ENCODE measurements at regions of chr12 and their contacts with region 1.

Region 1: GRCh38 chr12:103626498-103626897 is 39.4 kb downstream of the STAB2 start:
- DNase-seq: peak in 4 of 5 donors; percentile 63 to 77 (median 68)
- ATAC-seq: peak; percentile 79 to 91 (median 83)
- H3K4me3 ChIP-seq: no peak overlapping the region
- H3K27ac ChIP-seq: peak overlapping the region in 11 of 12 donors; percentile 37 to 82 (median 68)
- H3K4me1 ChIP-seq: peaks cover 0 to 19% (median 7%) of the 10 kb centered on the region in 12 donors
- H3K27me3 ChIP-seq: no peaks in the 10 kb centered on the region
- CTCF ChIP-seq: peak in 7 of 12 donors; percentile 25 to 70 (median 38)
- POLR2A ChIP-seq: no peak

Region 2: DNA sequence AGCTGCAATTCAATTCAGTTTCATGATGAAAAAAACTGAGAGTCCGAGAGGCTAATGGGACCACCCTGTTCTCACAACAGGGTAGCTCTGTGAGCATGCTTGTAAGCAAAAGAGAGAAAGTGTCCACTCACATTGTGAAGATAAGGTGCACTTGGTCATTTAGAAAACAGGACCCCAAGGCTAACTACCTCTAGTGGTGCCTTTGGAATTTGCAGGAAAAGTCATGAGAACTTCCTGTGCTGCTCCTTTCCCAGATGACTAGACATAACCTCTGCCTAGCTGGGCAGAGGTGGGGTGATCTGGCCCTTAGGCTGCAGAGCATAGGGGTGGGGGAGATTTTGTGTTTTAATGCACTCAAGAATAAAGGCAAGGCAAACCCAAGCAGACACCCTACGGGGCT is 79.4 kb after region 1 on chr12:
- intact Hi-C with region 1: no loop called
- DNase-seq: no peak
- ATAC-seq: no peak
- H3K4me3 ChIP-seq: no peak overlapping the region
- H3K27ac ChIP-seq: no peak overlapping the region
- H3K4me1 ChIP-seq: no peaks in the 10 kb centered on the region
- H3K27me3 ChIP-seq: no peaks in the 10 kb centered on the region
- CTCF ChIP-seq: no peak
- POLR2A ChIP-seq: no peak

Region 3: GRCh38 chr12:103742349-103742932 is 115.9 kb after region 1 on chr12:
- intact Hi-C with region 1: loop called in 2 of 10 experiments (anchors 10 kb)
- DNase-seq: peak in 2 of 5 donors; percentile 23 to 28
- ATAC-seq: peak; percentile 43 to 80 (median 68)
- H3K4me3 ChIP-seq: no peak overlapping the region
- H3K27ac ChIP-seq: peak overlapping the region in 4 of 12 donors; percentile 3 to 38 (median 10)
- H3K4me1 ChIP-seq: peaks cover 0 to 9% (median 0%) of the 10 kb centered on the region in 12 donors
- H3K27me3 ChIP-seq: no peaks in the 10 kb centered on the region
- CTCF ChIP-seq: no peak
- POLR2A ChIP-seq: no peak

Region 4: GRCh38 chr12:103758310-103759089 is 132.0 kb after region 1 on chr12:
- intact Hi-C with region 1: no loop called
- DNase-seq: no peak
- ATAC-seq: no peak
- H3K4me3 ChIP-seq: no peak overlapping the region
- H3K27ac ChIP-seq: peak overlapping the region in 1 of 12 donors; percentile 21
- H3K4me1 ChIP-seq: no peaks in the 10 kb centered on the region
- H3K27me3 ChIP-seq: no peaks in the 10 kb centered on the region
- CTCF ChIP-seq: no peak
- POLR2A ChIP-seq: no peak

Region 5: DNA sequence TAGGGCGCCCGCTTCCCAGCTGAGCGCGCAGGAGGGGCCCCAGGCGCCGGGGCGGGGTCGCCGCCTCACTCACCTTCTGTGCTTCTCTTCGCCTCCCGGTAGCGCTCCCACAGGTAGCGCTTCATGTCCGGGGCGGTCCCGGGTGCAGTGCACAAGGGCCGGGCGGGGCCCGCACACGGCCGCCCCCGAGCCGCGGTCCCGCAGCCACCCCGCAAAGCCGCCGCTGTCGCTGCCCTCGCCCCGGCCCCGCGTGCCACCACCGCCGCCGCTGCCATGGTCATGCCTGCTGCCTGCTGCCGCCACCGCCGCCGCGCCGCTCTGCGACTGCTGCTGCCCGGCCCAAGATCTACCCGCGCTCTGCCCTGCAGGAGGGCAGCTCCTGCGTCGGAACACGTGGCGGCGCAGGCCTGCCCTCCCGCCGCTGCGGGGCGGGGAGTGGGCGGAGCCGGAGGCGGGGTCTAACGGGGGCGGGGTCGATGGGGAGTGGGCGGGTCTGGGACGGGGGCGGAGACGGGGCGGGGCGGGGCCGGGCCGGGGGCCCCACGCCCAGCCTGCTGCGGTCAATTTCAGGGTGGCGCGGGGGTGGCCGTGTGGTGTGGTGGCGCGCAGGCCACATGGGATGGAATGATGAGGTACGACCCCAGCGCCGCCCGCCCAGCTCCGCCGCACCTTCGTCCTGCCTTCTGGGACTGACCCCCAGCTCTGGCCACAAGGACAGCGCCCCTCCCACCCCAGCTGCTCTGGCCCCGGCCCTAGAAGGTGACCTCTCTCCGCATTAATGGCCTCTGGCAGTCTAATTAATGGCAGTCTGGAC is 214.6 kb after region 1 on chr12 and contains the start of gene NT5DC3:
- intact Hi-C with region 1: no loop called
- DNase-seq: peak; percentile 79 to 93 (median 85)
- ATAC-seq: peak; percentile 89 to 97 (median 94)
- H3K4me3 ChIP-seq: peak within 1 kb of the TSS; percentile 52 to 83 (median 74)
- H3K27ac ChIP-seq: peak within 1 kb of the TSS; percentile 80 to 92 (median 86)
- H3K4me1 ChIP-seq: peaks cover 0 to 19% (median 3%) of the 10 kb centered on the region in 12 donors
- H3K27me3 ChIP-seq: no peaks in the 10 kb centered on the region
- CTCF ChIP-seq: no peak
- POLR2A ChIP-seq: peak; percentile 29 to 65
- total RNA-seq, gene NT5DC3: 2.4 to 6.3 (median 3.7) TPM

Region 6: DNA sequence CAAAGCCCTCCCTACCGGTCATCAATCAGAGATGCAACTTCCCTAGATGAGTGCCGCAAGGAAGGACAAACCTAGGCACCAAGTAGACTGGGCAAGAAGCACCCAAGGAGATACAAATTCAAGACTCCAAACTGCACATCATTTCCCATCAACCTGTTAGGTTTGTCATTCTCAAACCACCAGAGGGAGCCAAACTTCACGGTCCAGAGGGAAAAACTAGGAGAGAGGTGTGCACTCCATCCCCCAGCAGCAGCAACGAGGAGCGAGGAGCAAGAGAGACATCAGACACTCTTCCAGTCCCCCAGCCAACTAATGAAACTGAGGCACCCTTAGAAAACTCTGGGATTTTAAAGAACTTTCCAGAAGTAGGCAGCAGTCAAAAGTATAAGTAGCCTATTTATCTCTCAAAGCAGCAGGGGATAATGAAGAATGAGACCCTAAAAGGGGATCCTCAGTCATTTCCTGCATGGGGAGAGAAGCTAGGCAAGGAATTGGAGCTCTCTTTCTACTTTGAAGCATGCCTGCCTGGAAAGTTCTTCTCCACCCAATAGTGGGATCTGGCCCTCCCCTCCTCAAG is 251.5 kb after region 1 on chr12:
- intact Hi-C with region 1: loop called in 3 of 10 experiments (anchors 5 to 10 kb)
- DNase-seq: peak in 4 of 5 donors; percentile 26 to 45 (median 42)
- ATAC-seq: peak; percentile 42 to 78 (median 75)
- H3K4me3 ChIP-seq: no peak overlapping the region
- H3K27ac ChIP-seq: no peak overlapping the region
- H3K4me1 ChIP-seq: peaks cover 0 to 4% (median 0%) of the 10 kb centered on the region in 12 donors
- H3K27me3 ChIP-seq: no peaks in the 10 kb centered on the region
- CTCF ChIP-seq: peak; percentile 49 to 77 (median 70)
- POLR2A ChIP-seq: no peak

Measured in heart left ventricle (tissue), 16 donors.